HepG2 (cell line): ENCODE measurements at regions of chr2 and their contacts with region 1.

Region 1: GRCh38 chr2:81073412-81073811 is 768.9 kb upstream of the LRRTM1 start:
- DNase-seq: no peak
- ATAC-seq: no peak
- H3K4me3 ChIP-seq: no peak overlapping the region
- H3K27ac ChIP-seq: no peak overlapping the region
- H3K4me1 ChIP-seq: no peaks in the 10 kb centered on the region
- H3K27me3 ChIP-seq: no peaks in the 10 kb centered on the region
- CTCF ChIP-seq: no peak
- EP300 ChIP-seq: no peak
- POLR2A ChIP-seq: no peak
- RAD21 ChIP-seq: no peak

Region 2: GRCh38 chr2:81087646-81088045 is 14.2 kb after region 1 on chr2:
- CTCF ChIA-PET with region 1: no interaction called
- POLR2A ChIA-PET with region 1: no interaction called
- in situ Hi-C with region 1: no loop called
- intact Hi-C with region 1: loop called (anchors 1 kb)
- DNase-seq: no peak
- ATAC-seq: no peak
- H3K4me3 ChIP-seq: no peak overlapping the region
- H3K27ac ChIP-seq: no peak overlapping the region
- H3K4me1 ChIP-seq: no peaks in the 10 kb centered on the region
- H3K27me3 ChIP-seq: no peaks in the 10 kb centered on the region
- CTCF ChIP-seq: no peak
- EP300 ChIP-seq: no peak
- POLR2A ChIP-seq: no peak
- RAD21 ChIP-seq: no peak